Gastrocnemius medialis (tissue), 4 donors: ENCODE measurements at regions of chr13 and their contacts with region 1.

Region 1: GRCh38 chr13:20828539-20829364 is 55.0 kb upstream of the EEF1AKMT1 start:
- DNase-seq: no peak
- ATAC-seq: peak; percentile 33 to 50
- H3K4me3 ChIP-seq: peak overlapping the region; percentile 35 to 63 (median 49)
- H3K27ac ChIP-seq: peak overlapping the region; percentile 87 to 93 (median 88)
- H3K4me1 ChIP-seq: peaks cover 73 to 79% of the 10 kb centered on the region in 2 donors
- H3K27me3 ChIP-seq: no peaks in the 10 kb centered on the region
- CTCF ChIP-seq: peak; percentile 78 to 85 (median 84)
- POLR2A ChIP-seq: no peak

Region 2: DNA sequence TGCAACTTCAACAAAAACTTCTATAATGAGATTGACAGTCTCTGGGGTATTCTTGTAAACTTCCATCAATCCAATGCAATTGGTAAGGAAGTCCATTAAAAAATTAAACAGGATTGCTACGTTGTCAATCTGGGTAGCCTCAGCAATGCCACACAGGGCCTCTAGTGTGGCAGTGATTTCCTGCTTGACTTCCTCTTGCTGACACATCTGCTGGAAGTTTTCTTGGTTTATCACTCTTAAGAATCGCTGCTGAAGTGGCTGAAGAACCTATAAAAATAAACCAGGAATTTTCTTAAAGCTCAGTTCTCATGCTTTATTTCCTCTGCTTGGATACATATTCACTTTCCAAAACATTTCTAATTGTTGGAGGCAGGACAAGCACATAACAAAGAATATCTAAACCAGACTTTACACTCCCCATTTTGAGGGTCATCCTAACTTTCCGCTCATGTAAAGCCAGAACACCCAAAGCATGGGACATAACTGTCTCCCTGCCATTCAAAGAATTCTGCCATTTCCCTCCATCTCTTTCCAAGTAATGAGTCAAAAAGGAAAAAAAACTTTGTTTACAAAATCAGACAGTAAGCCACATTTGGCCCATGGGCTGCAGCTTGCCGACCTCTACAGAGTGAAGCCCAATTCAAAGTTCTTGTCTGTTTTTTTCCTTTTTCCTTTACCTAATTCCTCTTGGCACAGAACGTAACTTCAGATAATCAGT is 31.8 kb before region 1 on chr13:
- in situ Hi-C with region 1: no loop called
- intact Hi-C with region 1: no loop called
- DNase-seq: no peak
- ATAC-seq: no peak
- H3K4me3 ChIP-seq: no peak overlapping the region
- H3K27ac ChIP-seq: peak overlapping the region; percentile 29 to 66 (median 52)
- H3K4me1 ChIP-seq: peaks cover 0 to 10% of the 10 kb centered on the region in 2 donors
- H3K27me3 ChIP-seq: no peaks in the 10 kb centered on the region
- CTCF ChIP-seq: no peak
- POLR2A ChIP-seq: no peak

Region 3: DNA sequence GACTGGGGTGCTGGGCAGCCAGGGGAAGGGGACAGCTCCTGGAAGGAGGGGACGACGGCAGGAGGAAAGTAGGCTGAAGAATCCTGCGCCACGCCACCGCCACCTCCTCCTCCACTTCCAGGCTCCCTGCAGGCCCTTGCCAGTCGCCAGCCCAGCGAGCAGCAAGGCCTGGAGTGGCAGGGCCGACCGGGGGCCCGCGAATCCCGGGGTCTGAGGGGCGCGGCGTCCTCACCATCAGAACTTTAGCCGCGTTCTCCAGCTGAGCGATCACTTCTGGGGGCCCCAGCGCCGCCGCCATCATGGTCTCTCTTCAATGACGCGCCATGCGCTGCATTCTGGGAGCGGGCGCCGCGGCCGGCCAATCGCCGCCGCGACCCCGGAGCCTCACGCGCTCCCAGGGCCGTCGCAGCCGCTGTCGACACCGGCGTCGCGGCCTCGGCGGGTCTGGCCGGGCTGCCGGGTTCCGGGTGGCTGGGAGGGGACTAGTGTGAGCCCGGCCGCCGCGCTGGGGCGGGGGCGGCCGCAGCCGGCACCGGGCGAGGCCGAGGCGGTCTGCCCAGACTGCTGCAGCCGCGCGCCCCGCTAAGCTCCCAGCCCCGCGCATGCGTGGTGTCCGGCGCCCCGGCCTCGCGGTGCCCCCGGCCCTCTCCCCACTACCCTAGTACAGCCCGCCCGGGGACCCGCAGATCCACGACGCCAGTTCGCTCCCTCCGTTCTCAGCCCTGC is 73.8 kb after region 1 on chr13 and contains the start of gene XPO4:
- in situ Hi-C with region 1: no loop called
- intact Hi-C with region 1: loop called (anchors 5 kb)
- DNase-seq: peak; percentile 49 to 74
- ATAC-seq: peak; percentile 93 to 96
- H3K4me3 ChIP-seq: peak within 1 kb of the TSS; percentile 80 to 97 (median 92)
- H3K27ac ChIP-seq: peak within 1 kb of the TSS; percentile 93 to 99 (median 95)
- H3K4me1 ChIP-seq: peaks cover 10 to 18% of the 10 kb centered on the region in 2 donors
- H3K27me3 ChIP-seq: no peaks in the 10 kb centered on the region
- CTCF ChIP-seq: no peak
- POLR2A ChIP-seq: peak; percentile 70 to 74
- total RNA-seq, gene XPO4: 10.0 to 18.7 (median 14.7) TPM